Activated CD8-positive, alpha-beta memory T cell treated with anti-CD3 and anti-CD28 coated beads, Interleukin-2, amount 10 ng/mL, durations not matched to agents 7 days and 5 days (primary cell): ENCODE measurements at regions of chr10 and their contacts with region 1.

Region 1: GRCh38 chr10:68348265-68348741 is 15.6 kb upstream of the PBLD start:
- DNase-seq: peak; percentile 65
- ATAC-seq: peak; percentile 61
- H3K4me3 Mint-ChIP-seq: no peak overlapping the region
- H3K27ac Mint-ChIP-seq: peak overlapping the region; percentile 45
- H3K4me1 Mint-ChIP-seq: peaks cover 16% of the 10 kb centered on the region
- H3K27me3 Mint-ChIP-seq: no peaks in the 10 kb centered on the region

Region 2: DNA sequence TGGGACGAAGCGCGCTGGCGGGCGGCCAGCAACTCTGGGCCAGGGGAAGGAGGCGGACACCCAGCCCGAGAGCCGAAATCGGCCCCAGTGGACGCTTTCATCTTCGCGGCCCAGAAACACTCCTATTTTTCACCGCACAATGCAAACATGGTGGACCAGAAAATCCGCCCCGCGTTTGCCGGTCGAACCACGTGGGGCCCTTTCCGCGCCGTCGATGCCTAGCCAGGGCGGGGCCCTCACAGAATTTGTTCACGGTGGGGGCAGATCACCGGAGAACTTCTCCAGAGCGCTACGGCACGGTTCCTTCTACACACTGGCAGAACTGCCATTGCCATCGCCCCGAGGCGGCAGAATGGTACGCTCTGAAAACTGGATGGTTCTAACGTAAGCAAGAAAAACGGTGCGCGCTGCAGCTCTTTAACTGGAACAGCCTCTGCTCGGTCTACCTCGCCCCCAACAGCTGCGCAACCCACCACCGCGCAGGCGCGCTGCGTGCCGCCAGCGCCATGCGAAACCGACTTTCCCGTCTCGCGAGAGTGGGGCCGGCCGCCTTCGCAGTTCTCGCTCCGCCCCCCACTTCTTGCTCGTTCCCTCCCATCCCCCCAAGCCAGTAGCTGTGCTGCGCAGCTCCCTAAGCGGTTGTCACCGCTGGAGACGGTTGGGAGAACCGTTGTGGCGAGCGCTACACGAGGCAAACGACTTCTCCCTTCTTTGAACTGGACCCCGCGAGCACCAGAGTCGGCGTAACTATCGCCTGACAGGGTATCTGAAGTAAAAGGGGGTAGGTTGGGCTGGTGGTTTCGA is 16.6 kb before region 1 on chr10 and contains the start of gene HNRNPH3:
- CTCF ChIA-PET with region 1: interaction called, 31 read pairs
- DNase-seq: peak; percentile 99
- ATAC-seq: peak; percentile 87
- H3K4me3 Mint-ChIP-seq: peak within 1 kb of the TSS; percentile 99
- H3K27ac Mint-ChIP-seq: peak within 1 kb of the TSS; percentile 100
- H3K4me1 Mint-ChIP-seq: peaks cover 34% of the 10 kb centered on the region
- H3K27me3 Mint-ChIP-seq: no peaks in the 10 kb centered on the region
- total RNA-seq, gene HNRNPH3: 124 to 129 TPM